SK-N-SH (cell line): ENCODE measurements at regions of chr11 and their contacts with region 1.

Region 1: GRCh38 chr11:61627567-61628445 is 46.9 kb upstream of the SYT7 start:
- DNase-seq: peak; percentile 83
- H3K4me3 ChIP-seq: no peak overlapping the region; a peak in 1 of 4 replicates
- H3K27ac ChIP-seq: no peak overlapping the region; a peak in 1 of 4 replicates
- H3K4me1 ChIP-seq: peaks cover 0 to 15% of the 10 kb centered on the region in 2 experiments; a peak in 1 of 4 replicates
- H3K27me3 ChIP-seq: no peaks in the 10 kb centered on the region; the same call in 1 of the 2 replicates
- CTCF ChIP-seq: peak; percentile 87
- EP300 ChIP-seq: 0 out of 4 replicates have a peak, but pooled peaks of 1 of the 2 experiments have one; percentile 28
- RAD21 ChIP-seq: peak; percentile 94

Region 2: GRCh38 chr11:61429691-61430582 is 197.9 kb before region 1 on chr11 and contains the starts of genes CPSF7 and SDHAF2:
- CTCF ChIA-PET with region 1: interaction called, 18 read pairs
- POLR2A ChIA-PET with region 1: no interaction called
- DNase-seq: peak; percentile 96
- H3K4me3 ChIP-seq: peak within 1 kb of the TSS; percentile 87 to 95
- H3K27ac ChIP-seq: peak within 1 kb of the TSS; percentile 93 to 96
- H3K4me1 ChIP-seq: peaks cover 9 to 14% of the 10 kb centered on the region in 2 experiments
- H3K27me3 ChIP-seq: no peaks in the 10 kb centered on the region
- CTCF ChIP-seq: no peak
- EP300 ChIP-seq: no peak
- RAD21 ChIP-seq: no peak
- polyA plus RNA-seq, gene CPSF7: 44.0 and 49.4 TPM in 2 replicates
- polyA plus RNA-seq, gene SDHAF2: 81.7 and 116 TPM in 2 replicates

Region 3: DNA sequence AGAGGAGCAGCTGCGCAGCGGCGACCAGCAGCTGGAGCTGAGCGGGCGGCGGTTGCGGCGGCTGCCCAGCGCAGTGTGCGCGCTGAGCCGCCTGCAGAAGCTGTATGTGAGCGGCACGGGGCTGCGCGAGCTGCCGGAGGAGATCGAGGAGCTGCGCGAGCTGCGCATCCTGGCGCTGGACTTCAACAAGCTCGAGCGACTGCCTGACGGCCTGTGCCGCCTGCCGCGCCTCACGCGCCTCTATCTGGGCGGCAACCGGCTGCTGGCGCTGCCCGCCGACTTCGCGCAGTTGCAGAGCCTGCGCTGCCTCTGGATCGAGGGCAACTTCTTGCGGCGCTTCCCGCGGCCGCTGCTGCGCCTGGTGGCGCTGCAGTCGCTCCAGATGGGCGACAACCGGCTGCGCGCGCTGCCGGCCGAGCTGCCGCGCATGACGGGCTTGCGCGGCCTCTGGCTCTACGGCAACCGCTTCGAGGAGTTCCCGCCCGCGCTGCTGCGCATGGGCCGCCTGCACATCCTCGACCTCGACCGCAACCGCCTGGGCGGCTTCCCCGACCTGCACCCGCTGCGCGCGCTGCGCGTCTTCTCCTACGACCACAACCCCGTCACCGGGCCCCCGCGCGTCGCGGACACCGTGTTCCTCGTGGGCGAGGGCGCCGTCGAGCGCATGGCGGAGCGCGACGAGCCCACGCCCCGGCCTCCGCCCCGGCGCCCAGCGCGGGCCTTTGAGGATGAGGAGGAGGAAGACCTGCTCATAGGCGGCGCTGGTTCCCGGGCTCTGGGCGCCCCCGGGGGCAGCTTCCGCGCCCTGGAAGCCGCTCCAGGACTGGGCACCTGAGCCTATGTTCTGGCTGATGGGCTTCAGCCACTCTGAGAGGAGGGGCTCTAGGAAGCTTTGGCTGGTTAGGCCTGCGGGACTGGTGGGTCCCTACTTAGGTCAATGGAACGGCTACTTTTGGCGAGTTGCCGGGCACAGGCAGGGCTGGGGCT is 118.5 kb before region 1 on chr11:
- CTCF ChIA-PET with region 1: interaction called, 14 read pairs
- POLR2A ChIA-PET with region 1: interaction called, 3 read pairs
- DNase-seq: peak; percentile 92
- H3K4me3 ChIP-seq: peak overlapping the region in 1 of 2 experiments; percentile 29; a peak in 2 of 4 replicates
- H3K27ac ChIP-seq: no peak overlapping the region; a peak in 1 of 4 replicates
- H3K4me1 ChIP-seq: peaks cover 0 to 49% of the 10 kb centered on the region in 2 experiments; a peak in 3 of 4 replicates
- H3K27me3 ChIP-seq: peaks cover 32% of the 10 kb centered on the region
- CTCF ChIP-seq: peak; percentile 36; the same call in 1 of the 2 replicates
- EP300 ChIP-seq: no peak
- RAD21 ChIP-seq: peak; percentile 54

Region 4: GRCh38 chr11:61587521-61588453 is 40.0 kb before region 1 on chr11:
- CTCF ChIA-PET with region 1: interaction called, 96 read pairs
- POLR2A ChIA-PET with region 1: no interaction called
- DNase-seq: peak; percentile 69
- H3K4me3 ChIP-seq: no peak overlapping the region
- H3K27ac ChIP-seq: no peak overlapping the region
- H3K4me1 ChIP-seq: peaks cover 0 to 2% of the 10 kb centered on the region in 2 experiments; a peak in 1 of 4 replicates
- H3K27me3 ChIP-seq: peaks cover 23% of the 10 kb centered on the region
- CTCF ChIP-seq: no peak
- EP300 ChIP-seq: no peak
- RAD21 ChIP-seq: no peak

Region 5: DNA sequence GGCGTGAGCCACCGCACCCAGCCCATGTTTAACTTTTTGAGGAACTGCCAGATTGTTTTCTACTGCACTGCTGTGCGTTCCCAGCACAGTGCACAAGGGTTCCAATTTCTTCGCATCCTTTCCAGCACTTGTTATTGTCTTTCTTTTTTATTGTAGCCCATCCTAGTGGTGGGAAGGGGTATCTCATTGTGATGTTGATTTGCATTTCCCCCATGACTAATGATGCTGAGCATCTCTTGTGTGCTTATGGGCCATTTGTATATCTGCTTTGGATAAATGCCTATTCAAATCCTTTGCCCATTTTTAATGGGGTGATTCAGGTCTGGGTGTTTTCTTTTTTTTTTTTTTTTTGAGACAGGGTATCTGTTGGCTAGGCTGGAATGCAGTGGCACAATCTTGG is 10.3 kb before region 1 on chr11:
- CTCF ChIA-PET with region 1: interaction called, 15 read pairs
- POLR2A ChIA-PET with region 1: no interaction called
- DNase-seq: no peak
- H3K4me3 ChIP-seq: no peak overlapping the region
- H3K27ac ChIP-seq: no peak overlapping the region
- H3K4me1 ChIP-seq: peaks cover 0 to 2% of the 10 kb centered on the region in 2 experiments; a peak in 1 of 4 replicates
- H3K27me3 ChIP-seq: peaks cover 9% of the 10 kb centered on the region; the same call in 1 of the 2 replicates
- CTCF ChIP-seq: peak; percentile 17; the same call in 1 of the 2 replicates
- EP300 ChIP-seq: no peak
- RAD21 ChIP-seq: no peak

Region 6: DNA sequence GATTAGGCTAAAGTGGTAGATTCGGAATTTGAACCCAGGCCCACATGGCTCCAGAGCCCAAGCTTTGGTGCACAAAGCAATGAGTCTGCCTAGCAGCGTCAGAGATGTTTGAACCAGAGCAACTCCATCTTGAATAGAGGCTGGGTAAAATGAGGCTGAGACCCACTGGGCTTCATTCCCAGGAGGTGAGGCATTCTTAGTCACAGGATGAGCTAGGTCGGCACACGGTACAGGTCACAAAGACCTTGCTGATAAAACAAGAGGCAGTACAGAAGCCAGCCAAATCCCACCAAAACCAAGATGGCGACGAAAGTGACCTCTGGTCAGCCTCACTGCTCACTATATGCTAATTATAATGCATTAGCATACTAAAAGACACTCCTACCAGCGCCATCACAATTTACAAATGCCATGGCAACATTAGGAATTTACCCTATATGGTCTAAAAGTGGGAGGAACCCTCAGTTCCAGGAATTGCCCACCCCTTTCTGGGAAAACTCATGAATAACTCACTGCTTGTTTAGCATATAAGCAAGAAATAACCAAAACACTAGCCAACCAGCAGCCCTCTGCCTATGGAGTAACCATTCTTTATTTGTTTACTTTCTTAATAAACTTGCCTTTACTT is 12.1 kb after region 1 on chr11:
- CTCF ChIA-PET with region 1: interaction called, 42 read pairs
- POLR2A ChIA-PET with region 1: no interaction called
- DNase-seq: no peak
- H3K4me3 ChIP-seq: no peak overlapping the region
- H3K27ac ChIP-seq: no peak overlapping the region
- H3K4me1 ChIP-seq: peaks cover 0 to 2% of the 10 kb centered on the region in 2 experiments; a peak in 1 of 4 replicates
- H3K27me3 ChIP-seq: no peaks in the 10 kb centered on the region; the same call in 1 of the 2 replicates
- CTCF ChIP-seq: no peak
- EP300 ChIP-seq: no peak
- RAD21 ChIP-seq: no peak